ENCODE measurements at regions of chr3 and their contacts with region 1.

Region 1: DNA sequence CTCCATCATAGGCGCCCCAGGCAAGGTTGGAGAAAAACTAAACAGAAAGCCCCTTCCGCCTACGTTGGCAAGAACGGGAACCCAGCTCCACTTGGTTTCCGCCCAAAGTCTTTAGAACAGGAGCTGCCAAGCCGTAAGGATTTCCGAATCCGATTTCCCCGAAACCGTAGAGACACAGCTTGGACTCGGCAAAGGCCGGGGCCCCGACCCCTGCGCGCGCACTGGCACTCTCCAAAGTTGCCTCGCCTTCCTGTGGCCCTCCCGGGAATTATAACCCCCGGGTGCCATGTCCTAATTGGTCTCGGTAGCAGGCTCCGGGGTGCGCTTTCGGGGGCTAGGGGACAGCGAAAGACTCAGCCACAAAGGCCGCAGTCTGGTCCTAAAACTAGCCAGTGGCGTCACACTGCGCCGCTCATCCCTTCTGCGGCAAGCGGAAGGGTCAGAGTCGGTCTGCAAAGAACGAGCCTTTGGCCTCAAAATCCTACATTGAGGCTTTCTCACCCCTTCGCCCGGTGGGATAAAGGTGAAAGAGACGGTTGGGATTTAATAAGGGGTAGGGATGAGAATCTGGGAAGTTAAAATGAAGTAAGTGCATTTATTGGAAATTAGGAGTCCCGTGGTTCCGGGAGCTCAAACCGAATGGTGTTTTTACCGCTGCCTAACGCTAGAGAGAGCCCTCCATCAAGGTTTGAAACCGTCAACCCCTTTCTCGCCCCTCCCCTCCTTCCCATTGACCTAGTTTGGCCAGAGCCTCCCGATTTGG is 6.8 kb downstream of the BCL6 start:
- DNase-seq: peak; percentile 87
- H3K4me3 ChIP-seq: peak overlapping the region; percentile 47 to 82 (median 58)
- H3K27ac ChIP-seq: peak overlapping the region; percentile 94
- H3K4me1 ChIP-seq: peaks cover 46% of the 10 kb centered on the region
- H3K27me3 ChIP-seq: no peaks in the 10 kb centered on the region
- CTCF ChIP-seq: peak; percentile 79 to 83
- POLR2A ChIP-seq: no peak

Region 2: DNA sequence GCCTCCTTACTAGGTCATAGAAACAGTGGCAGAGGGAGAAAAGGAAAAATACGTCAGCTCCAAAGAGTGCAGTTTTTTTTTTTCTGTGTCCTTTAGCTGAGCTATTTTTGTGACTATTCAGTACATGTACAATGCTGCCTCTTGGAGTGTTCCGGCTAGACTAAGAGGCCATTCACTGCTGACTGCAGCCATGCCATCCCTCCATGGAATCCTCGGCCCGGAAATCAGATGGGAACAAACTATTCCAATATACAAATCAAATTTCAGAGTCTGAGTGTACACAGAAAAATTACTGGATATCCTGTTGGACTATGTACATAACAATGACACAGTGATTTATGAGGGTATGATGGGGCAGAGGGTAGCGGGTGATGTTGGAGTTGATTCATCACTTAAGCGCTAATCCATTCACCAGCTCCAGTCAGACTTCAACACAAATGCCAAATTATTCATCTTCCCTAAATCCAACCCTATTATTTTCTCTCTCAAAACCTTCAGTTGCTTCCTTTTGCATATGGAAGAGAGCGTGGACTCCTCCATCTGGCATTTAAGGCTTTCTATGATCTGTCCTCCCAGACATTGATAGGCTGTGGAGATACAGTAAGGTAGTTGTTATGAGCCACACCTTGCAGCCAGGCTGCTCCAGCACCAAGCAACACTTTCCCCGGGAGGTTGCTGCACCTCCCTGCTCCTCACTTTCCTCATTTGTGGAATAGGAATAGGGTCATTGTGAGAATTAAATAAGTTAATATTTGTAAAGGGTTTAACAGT is 524.6 kb after region 1 on chr3:
- CTCF ChIA-PET with region 1: interaction called, 7 read pairs
- POLR2A ChIA-PET with region 1: no interaction called
- dilution Hi-C with region 1: no loop called
- intact Hi-C with region 1: loop called (anchors 1 kb)
- DNase-seq: peak; percentile 97
- H3K4me3 ChIP-seq: no peak overlapping the region
- H3K27ac ChIP-seq: peak overlapping the region; percentile 88
- H3K4me1 ChIP-seq: peaks cover 79% of the 10 kb centered on the region
- H3K27me3 ChIP-seq: no peaks in the 10 kb centered on the region
- CTCF ChIP-seq: no peak
- POLR2A ChIP-seq: peak; percentile 65

Region 3: GRCh38 chr3:188507244-188507720 is 768.8 kb after region 1 on chr3:
- CTCF ChIA-PET with region 1: interaction called, 3 read pairs
- POLR2A ChIA-PET with region 1: interaction called, 3 read pairs
- dilution Hi-C with region 1: no loop called
- intact Hi-C with region 1: loop called (anchors 2 kb)
- DNase-seq: peak; percentile 83
- H3K4me3 ChIP-seq: no peak overlapping the region
- H3K27ac ChIP-seq: peak overlapping the region; percentile 33
- H3K4me1 ChIP-seq: peaks cover 25% of the 10 kb centered on the region
- H3K27me3 ChIP-seq: no peaks in the 10 kb centered on the region
- CTCF ChIP-seq: no peak
- POLR2A ChIP-seq: no peak

Region 4: DNA sequence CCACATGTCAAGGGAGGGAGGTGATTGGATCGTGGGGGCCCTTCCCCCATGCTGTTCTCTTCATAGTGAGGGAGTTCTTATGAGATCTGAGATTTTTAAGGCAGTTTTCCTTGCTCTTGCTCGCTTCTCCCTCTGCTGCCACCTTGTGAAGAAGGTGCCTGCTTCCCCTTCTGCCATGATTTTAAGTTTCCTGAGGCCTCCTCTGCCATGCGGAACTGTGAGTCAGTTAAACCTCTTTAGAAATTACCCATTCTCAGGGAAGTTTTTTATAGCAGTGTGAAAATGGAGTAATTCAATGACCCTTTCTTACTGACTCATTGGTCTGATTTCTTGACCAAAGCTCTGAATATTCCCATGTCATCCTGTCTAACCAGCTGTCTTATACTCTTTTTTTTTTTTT is 948.9 kb after region 1 on chr3:
- CTCF ChIA-PET with region 1: interaction called, 3 read pairs
- POLR2A ChIA-PET with region 1: no interaction called
- dilution Hi-C with region 1: no loop called
- intact Hi-C with region 1: loop called (anchors 5 kb)
- DNase-seq: peak; percentile 6
- H3K4me3 ChIP-seq: no peak overlapping the region
- H3K27ac ChIP-seq: no peak overlapping the region
- H3K4me1 ChIP-seq: peaks cover 7% of the 10 kb centered on the region
- H3K27me3 ChIP-seq: no peaks in the 10 kb centered on the region
- CTCF ChIP-seq: no peak
- POLR2A ChIP-seq: no peak

Region 5: DNA sequence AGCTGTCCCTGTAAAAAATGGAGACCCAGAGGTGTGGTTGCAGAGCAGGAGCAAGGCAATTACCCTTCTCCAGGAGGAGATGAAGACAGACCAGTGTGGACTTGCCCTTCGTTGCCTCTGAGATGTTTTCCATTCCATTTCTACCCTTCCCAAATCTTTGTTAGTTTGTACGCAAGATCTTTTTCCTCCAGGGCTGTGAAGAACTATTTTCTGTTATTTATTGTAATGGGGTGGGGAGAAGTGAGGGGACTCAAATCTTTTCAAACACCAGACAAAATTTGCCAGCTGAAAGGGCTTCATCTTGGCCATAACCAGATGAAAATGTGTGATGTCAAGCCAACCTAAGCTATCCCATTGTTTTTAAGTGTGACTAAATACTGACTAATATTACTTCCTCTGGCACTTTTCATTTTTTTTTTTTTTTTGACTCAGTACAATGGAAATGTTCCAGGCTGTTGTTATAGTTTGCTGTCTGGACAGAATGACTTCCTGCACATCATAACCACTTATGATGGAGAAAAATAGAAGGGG is 1162.0 kb after region 1 on chr3:
- CTCF ChIA-PET with region 1: interaction called, 13 read pairs
- POLR2A ChIA-PET with region 1: no interaction called
- dilution Hi-C with region 1: no loop called
- intact Hi-C with region 1: loop called (anchors 1 kb)
- DNase-seq: peak; percentile 94
- H3K4me3 ChIP-seq: peak overlapping the region in 1 of 3 experiments; percentile 35
- H3K27ac ChIP-seq: peak overlapping the region; percentile 100
- H3K4me1 ChIP-seq: peaks cover 37% of the 10 kb centered on the region
- H3K27me3 ChIP-seq: no peaks in the 10 kb centered on the region
- CTCF ChIP-seq: no peak
- POLR2A ChIP-seq: no peak

Region 6: GRCh38 chr3:188974856-188975599 is 1236.5 kb after region 1 on chr3:
- CTCF ChIA-PET with region 1: interaction called, 19 read pairs
- POLR2A ChIA-PET with region 1: interaction called, 3 read pairs
- dilution Hi-C with region 1: no loop called
- intact Hi-C with region 1: no loop called
- DNase-seq: no peak
- H3K4me3 ChIP-seq: no peak overlapping the region
- H3K27ac ChIP-seq: no peak overlapping the region
- H3K4me1 ChIP-seq: no peaks in the 10 kb centered on the region
- H3K27me3 ChIP-seq: peaks cover 10 to 20% of the 10 kb centered on the region in 2 experiments
- CTCF ChIP-seq: no peak
- POLR2A ChIP-seq: no peak